Activated CD4-positive, alpha-beta memory T cell treated with anti-CD3 and anti-CD28 coated beads for 36 hours (primary cell): ENCODE measurements at regions of chr9 and their contacts with region 1.

Region 1: GRCh38 chr9:36190388-36191287 is at the start of gene CLTA:
- DNase-seq: peak; percentile 98
- H3K4me3 Mint-ChIP-seq: peak within 1 kb of the TSS; percentile 94
- H3K27ac Mint-ChIP-seq: peak within 1 kb of the TSS; percentile 86
- H3K4me1 Mint-ChIP-seq: peaks cover 45% of the 10 kb centered on the region
- H3K27me3 Mint-ChIP-seq: no peaks in the 10 kb centered on the region
- total RNA-seq, gene CLTA: 139 to 144 TPM

Region 2: GRCh38 chr9:36148311-36149051 is 42.2 kb before region 1 on chr9:
- CTCF ChIA-PET with region 1: interaction called, 4 read pairs
- POLR2A ChIA-PET with region 1: interaction called, 5 read pairs
- intact Hi-C with region 1: loop called (anchors 1 kb)
- DNase-seq: peak; percentile 88
- H3K4me3 Mint-ChIP-seq: no peak overlapping the region
- H3K27ac Mint-ChIP-seq: peak overlapping the region; percentile 30
- H3K4me1 Mint-ChIP-seq: peaks cover 84% of the 10 kb centered on the region
- H3K27me3 Mint-ChIP-seq: no peaks in the 10 kb centered on the region

Region 3: GRCh38 chr9:36204906-36205547 is 14.4 kb after region 1 on chr9:
- CTCF ChIA-PET with region 1: interaction called, 22 read pairs
- POLR2A ChIA-PET with region 1: interaction called, 7 read pairs
- intact Hi-C with region 1: loop called (anchors 2 kb)
- DNase-seq: no peak
- H3K4me3 Mint-ChIP-seq: no peak overlapping the region
- H3K27ac Mint-ChIP-seq: no peak overlapping the region
- H3K4me1 Mint-ChIP-seq: peaks cover 48% of the 10 kb centered on the region
- H3K27me3 Mint-ChIP-seq: no peaks in the 10 kb centered on the region

Region 4: DNA sequence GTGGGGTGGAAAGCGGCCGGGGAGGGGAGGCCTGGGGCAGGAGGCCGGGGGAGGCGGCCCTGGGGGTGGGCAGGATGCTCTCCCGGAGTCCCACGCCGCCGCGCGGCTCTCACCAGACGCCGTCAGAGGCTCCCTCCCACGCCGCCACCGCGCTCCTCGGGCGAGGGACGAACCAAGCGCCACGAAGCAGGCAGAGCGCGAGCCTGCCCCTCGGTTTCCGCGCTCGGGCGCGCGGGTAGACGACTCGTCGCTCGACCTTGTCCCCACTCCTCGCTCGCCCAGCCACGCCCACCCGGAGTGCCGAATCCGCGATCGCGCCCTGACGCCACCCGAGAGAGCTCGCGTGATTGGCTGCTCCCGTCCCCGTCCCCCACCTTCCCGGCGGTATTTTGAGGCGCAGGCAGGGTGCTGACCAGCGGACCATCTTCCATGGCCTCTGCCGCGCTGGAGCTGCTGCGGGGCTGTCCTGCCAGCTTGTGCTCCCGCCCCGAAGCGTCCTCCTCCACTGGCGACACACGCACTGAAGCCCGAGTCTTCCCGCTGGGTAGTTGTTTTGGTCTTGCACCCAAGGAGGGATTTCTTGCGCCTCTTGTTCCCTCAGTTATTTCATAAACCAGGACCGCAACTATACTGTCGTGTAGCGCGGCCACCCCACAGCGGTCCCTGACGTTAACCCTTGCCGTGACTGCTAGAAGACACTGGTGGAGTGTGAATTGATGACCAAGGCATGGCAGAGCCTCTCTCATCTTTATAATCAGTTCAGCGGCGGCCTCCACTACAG is 67.8 kb after region 1 on chr9 and contains the start of gene GNE:
- CTCF ChIA-PET with region 1: interaction called, 5 read pairs
- POLR2A ChIA-PET with region 1: interaction called, 6 read pairs
- intact Hi-C with region 1: loop called (anchors 2 kb)
- DNase-seq: peak; percentile 98
- H3K4me3 Mint-ChIP-seq: peak within 1 kb of the TSS; percentile 96
- H3K27ac Mint-ChIP-seq: peak within 1 kb of the TSS; percentile 80
- H3K4me1 Mint-ChIP-seq: peaks cover 14% of the 10 kb centered on the region
- H3K27me3 Mint-ChIP-seq: no peaks in the 10 kb centered on the region
- total RNA-seq, gene GNE: 19.2 to 20.5 TPM

Region 5: DNA sequence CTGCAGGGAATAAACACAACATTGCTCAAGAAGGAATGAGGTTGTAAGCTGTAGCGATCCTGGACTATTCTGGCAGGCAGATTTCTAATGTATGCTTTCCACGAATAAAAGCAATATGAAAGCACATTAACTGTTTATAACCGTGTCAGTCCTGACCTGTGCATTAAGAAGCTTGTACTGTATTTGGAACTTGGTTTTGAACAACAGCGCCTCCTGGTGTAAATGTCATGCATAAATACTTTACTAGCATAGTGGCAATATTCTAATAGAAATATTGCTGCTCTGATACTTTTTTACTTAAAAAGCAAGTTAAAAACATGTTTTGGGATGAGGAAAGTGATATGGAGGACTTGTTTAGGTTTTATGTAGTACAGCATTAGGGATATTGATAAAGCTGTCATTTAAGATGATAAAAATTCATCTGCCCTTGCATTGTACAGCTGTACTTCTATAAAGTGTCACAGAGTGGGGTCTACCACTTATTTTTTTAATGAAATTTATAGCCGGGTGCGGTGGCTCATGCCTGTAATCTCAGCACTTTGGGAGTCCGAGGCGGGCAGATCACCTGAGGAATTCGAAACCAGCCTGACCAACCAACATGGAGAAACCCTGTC is 138.3 kb after region 1 on chr9:
- CTCF ChIA-PET with region 1: interaction called, 45 read pairs
- POLR2A ChIA-PET with region 1: no interaction called
- intact Hi-C with region 1: loop called (anchors 2 kb)
- DNase-seq: peak; percentile 17
- H3K4me3 Mint-ChIP-seq: no peak overlapping the region
- H3K27ac Mint-ChIP-seq: no peak overlapping the region
- H3K4me1 Mint-ChIP-seq: peaks cover 5% of the 10 kb centered on the region
- H3K27me3 Mint-ChIP-seq: no peaks in the 10 kb centered on the region

Region 6: DNA sequence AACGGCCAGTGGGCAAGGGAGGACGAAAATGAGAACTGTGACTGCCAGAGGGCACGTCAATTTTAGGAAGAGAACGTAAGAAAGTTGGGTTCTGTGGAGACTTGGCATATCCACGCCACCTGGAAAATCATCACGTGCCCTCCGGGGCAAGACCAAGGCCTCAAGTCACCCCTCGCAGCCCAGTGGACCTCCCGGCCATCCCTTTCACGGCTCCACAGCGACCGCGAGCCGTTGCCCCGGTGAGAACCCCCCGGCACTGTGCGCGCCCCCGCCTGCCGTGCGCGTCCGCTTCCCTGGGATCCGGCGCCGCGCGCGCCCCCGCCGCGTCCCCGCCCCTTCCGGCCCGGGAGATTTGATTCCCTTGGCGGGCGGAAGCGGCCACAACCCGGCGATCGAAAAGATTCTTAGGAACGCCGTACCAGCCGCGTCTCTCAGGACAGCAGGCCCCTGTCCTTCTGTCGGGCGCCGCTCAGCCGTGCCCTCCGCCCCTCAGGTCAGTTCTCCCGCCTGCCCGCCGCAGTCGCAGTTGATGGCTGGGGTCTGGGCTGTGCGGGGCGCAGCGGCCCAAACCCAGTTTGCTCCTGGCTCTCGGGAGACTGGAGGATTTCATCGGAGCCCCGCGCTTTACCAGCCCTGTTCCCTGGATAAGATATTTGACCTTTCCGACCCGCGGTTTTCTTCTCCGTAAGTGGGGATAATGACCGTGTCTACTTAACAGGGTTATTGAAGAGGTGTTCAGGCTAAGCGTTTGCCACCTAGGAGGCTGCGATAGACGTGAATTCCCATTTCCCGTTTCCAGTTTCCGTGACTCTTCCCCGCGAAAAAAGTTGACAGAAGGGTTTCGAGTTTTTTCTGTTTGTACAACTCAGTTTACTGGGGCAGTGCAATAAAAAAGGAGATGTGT is 382.1 kb after region 1 on chr9 and contains the start of gene MELK:
- CTCF ChIA-PET with region 1: no interaction called
- POLR2A ChIA-PET with region 1: no interaction called
- intact Hi-C with region 1: loop called (anchors 5 kb)
- DNase-seq: peak; percentile 90
- H3K4me3 Mint-ChIP-seq: peak within 1 kb of the TSS; percentile 92
- H3K27ac Mint-ChIP-seq: peak within 1 kb of the TSS; percentile 80
- H3K4me1 Mint-ChIP-seq: peaks cover 30% of the 10 kb centered on the region
- H3K27me3 Mint-ChIP-seq: no peaks in the 10 kb centered on the region
- total RNA-seq, gene MELK: 68.4 to 69.6 TPM